Activated naive CD4-positive, alpha-beta T cell treated with anti-CD3 and anti-CD28 coated beads, Interleukin-2, amount 10 ng/mL, durations not matched to agents 7 days and 5 days (primary cell): ENCODE measurements at regions of chr4 and their contacts with region 1.

Region 1: DNA sequence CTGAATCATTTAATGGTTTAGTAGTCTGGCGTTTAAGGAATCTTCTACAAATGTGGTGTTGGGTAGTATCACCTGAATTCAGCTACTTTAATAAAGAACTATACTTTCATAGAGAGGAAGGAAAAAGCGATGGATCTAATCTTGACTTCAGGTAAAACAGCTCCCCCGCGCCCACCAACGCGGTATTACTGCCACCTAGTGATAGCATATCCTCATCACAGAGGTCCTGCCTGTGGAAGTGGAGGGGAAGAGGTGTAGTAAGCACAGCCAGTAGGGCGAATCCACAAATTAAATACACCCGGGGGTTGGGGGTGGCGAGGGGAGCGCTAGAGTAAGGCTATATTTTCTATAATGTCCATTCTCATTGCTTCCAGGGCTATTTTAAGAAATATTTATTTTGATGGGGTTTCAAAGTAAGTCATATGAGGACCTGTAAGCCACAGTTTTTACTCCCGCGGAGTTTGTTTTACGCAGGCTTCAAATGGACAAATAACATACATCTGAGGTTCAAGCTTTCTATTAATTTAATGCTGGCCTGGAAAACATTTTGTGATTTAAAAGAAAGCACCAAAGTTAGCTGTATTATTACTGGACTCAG is 8.3 kb upstream of the DAPP1 start:
- DNase-seq: peak; percentile 82
- H3K4me3 Mint-ChIP-seq: no peak overlapping the region
- H3K27ac Mint-ChIP-seq: no peak overlapping the region
- H3K4me1 Mint-ChIP-seq: peaks cover 14% of the 10 kb centered on the region
- H3K27me3 Mint-ChIP-seq: peaks cover 34% of the 10 kb centered on the region

Region 2: DNA sequence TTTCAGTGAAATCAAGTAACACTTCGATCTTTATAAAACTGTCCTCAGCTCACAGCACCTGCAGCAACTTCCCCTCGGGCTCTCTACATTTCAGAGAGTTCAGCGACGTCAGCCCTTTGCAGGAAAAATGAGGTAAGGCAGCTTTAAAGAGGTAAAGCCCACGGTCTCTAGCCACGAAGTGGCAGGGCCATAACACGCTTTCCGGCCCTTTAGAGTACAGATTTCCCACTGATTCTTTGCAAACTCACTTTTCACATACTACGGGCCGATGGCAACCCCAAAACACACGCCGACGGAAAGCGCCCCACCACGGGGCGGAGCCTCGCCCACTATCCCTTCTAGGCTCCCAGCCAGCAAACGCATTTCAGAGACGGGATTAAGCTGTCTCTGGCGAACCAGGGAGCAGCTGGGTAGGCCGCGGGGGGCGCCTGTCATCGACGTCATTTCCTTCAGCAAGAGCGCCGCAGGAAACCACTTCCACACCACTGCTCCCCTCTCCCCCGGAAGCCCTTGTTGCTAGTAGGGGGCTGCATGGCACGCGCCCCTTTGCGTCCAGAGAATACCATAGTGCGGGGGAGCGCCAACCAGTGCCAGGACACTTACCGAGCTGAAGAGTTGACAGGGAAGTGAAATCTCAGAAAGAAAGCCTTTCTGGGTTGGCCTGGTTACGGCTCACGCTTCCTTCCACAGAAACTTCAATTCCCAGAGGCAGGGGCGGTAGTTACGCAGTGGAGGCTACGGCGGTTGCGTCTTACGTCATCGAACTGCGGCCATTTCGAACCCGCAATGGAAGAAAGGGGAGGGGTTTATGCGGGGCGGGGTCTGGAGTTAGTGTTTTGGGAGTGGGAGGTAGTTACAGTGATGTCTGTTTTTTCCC is 244.8 kb before region 1 on chr4 and contains the start of gene TRMT10A:
- CTCF ChIA-PET with region 1: interaction called, 25 read pairs
- DNase-seq: peak; percentile 97
- H3K4me3 Mint-ChIP-seq: peak within 1 kb of the TSS; percentile 99
- H3K27ac Mint-ChIP-seq: peak within 1 kb of the TSS; percentile 100
- H3K4me1 Mint-ChIP-seq: peaks cover 26% of the 10 kb centered on the region
- H3K27me3 Mint-ChIP-seq: peaks cover 11% of the 10 kb centered on the region

Region 3: GRCh38 chr4:99790796-99791617 is 17.4 kb before region 1 on chr4:
- CTCF ChIA-PET with region 1: no interaction called
- DNase-seq: no peak
- H3K4me3 Mint-ChIP-seq: no peak overlapping the region
- H3K27ac Mint-ChIP-seq: no peak overlapping the region
- H3K4me1 Mint-ChIP-seq: no peaks in the 10 kb centered on the region
- H3K27me3 Mint-ChIP-seq: no peaks in the 10 kb centered on the region

Region 4: GRCh38 chr4:99856166-99856565 is 47.8 kb after region 1 on chr4:
- CTCF ChIA-PET with region 1: interaction called, 17 read pairs
- DNase-seq: peak; percentile 24
- H3K4me3 Mint-ChIP-seq: peak overlapping the region; percentile 8
- H3K27ac Mint-ChIP-seq: peak overlapping the region; percentile 85
- H3K4me1 Mint-ChIP-seq: peaks cover 61% of the 10 kb centered on the region
- H3K27me3 Mint-ChIP-seq: no peaks in the 10 kb centered on the region

Region 5: GRCh38 chr4:99885063-99885664 is 76.8 kb after region 1 on chr4:
- CTCF ChIA-PET with region 1: interaction called, 90 read pairs
- DNase-seq: peak; percentile 54
- H3K4me3 Mint-ChIP-seq: no peak overlapping the region
- H3K27ac Mint-ChIP-seq: no peak overlapping the region
- H3K4me1 Mint-ChIP-seq: peaks cover 11% of the 10 kb centered on the region
- H3K27me3 Mint-ChIP-seq: no peaks in the 10 kb centered on the region

Region 6: DNA sequence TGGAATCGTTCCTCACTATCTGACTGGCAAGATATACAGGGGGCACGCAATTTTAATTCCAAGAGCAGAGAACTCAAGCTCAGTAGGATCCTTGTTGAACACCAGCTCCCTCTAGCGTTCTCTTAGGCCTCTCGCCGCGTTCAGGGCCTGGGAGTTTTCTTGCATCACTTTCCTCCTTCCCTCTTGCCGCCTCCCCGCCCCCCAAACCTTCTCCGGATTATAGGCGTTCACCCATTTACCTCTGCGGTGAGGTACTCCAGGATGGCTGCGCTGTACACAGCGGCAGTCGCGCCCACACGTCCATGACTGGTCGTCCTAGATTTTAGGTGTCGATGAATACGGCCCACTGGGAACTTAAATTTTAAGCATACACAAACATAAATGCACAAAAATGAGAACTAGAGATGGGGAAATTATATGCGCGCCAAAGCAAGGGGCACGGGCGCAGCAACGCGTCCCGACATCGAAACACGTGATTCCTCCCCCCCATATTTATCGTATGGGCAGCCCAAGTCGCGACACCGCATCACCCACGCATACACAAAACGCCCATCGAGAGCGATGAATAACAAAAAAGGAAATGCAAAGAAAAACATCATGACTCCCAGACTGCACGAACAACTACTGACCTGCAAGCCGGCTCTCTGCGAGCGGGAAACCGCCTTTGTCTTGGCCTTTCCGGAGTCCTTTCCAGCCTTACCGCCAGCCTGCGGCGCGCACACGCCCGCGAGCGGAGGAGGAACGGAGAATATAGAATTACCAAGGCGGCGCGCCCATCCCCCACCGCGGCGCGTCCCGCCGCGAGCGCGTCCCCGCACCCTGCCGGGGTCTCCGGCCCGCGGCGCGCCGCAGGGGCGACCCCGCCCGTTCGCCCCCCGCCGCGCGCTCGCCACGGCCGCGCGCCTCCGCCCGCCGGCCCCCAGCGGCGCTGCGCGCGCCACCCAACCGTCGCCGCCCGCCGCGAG is 141.0 kb after region 1 on chr4:
- CTCF ChIA-PET with region 1: interaction called, 13 read pairs
- DNase-seq: peak; percentile 94
- H3K4me3 Mint-ChIP-seq: no peak overlapping the region
- H3K27ac Mint-ChIP-seq: no peak overlapping the region
- H3K4me1 Mint-ChIP-seq: peaks cover 38% of the 10 kb centered on the region
- H3K27me3 Mint-ChIP-seq: no peaks in the 10 kb centered on the region

Region 7: DNA sequence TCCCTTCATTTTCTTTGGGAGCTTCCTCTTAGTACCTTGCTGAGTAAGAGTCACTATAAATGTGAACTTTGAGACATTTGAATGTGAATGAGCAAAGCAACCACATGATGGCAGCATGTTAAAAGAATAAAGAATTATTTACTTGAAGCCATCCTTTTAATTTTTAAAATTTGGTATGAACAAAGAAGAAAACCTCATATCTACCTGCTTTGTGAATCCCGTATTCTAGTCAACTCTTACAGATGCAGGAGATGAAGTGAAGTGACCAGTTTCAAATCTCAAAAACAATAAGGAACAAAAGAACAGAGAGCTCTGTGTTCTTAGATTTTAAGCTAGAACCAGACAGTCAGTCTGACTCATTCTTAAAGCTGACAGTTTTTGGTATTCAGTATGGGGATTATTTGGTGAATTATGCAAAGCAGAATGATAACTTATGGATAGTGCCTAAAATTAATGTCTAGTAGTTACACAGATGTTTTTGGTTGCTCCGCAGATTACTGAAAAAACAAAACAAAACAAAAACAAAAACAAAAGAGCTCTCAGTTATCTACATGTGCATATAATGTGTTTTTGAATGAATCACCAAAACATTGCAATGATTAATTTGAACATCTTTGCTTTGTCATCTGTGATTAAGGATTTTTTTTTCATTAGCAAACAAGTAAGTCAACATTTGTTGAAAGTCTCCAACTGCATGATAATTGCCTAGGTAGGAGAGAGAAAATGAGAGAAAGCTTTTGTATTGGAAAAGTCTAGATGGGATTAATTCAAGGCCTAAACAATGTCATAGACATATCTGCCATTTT is 189.9 kb after region 1 on chr4:
- CTCF ChIA-PET with region 1: no interaction called
- DNase-seq: no peak
- H3K4me3 Mint-ChIP-seq: no peak overlapping the region
- H3K27ac Mint-ChIP-seq: no peak overlapping the region
- H3K4me1 Mint-ChIP-seq: no peaks in the 10 kb centered on the region
- H3K27me3 Mint-ChIP-seq: no peaks in the 10 kb centered on the region

Region 8: GRCh38 chr4:100189820-100190642 is 381.7 kb after region 1 on chr4 and contains the start of gene DDIT4L:
- CTCF ChIA-PET with region 1: no interaction called
- DNase-seq: peak; percentile 21
- H3K4me3 Mint-ChIP-seq: peak within 1 kb of the TSS; percentile 65
- H3K27ac Mint-ChIP-seq: peak within 1 kb of the TSS; percentile 11
- H3K4me1 Mint-ChIP-seq: peaks cover 15% of the 10 kb centered on the region
- H3K27me3 Mint-ChIP-seq: peaks cover 39% of the 10 kb centered on the region